Activated CD8-positive, alpha-beta T cell treated with anti-CD3 and anti-CD28 coated beads for 36 hours (primary cell): ENCODE measurements at regions of chr1 and their contacts with region 1.

Region 1: GRCh38 chr1:167533851-167534300 is 15.5 kb upstream of the CD247 start:
- DNase-seq: peak; percentile 74
- ATAC-seq: peak; percentile 94
- H3K4me3 Mint-ChIP-seq: no peak overlapping the region
- H3K27ac Mint-ChIP-seq: no peak overlapping the region
- H3K4me1 Mint-ChIP-seq: peaks cover 4% of the 10 kb centered on the region
- H3K27me3 Mint-ChIP-seq: no peaks in the 10 kb centered on the region
- CTCF ChIP-seq: peak; percentile 99

Region 2: GRCh38 chr1:167196166-167196565 is 337.7 kb before region 1 on chr1:
- CTCF ChIA-PET with region 1: no interaction called
- POLR2A ChIA-PET with region 1: no interaction called
- intact Hi-C with region 1: no loop called
- DNase-seq: no peak
- ATAC-seq: peak; percentile 54
- H3K4me3 Mint-ChIP-seq: no peak overlapping the region
- H3K27ac Mint-ChIP-seq: no peak overlapping the region
- H3K4me1 Mint-ChIP-seq: peaks cover 6% of the 10 kb centered on the region
- H3K27me3 Mint-ChIP-seq: peaks cover 2% of the 10 kb centered on the region
- CTCF ChIP-seq: no peak

Region 3: GRCh38 chr1:167401260-167401873 is 132.5 kb before region 1 on chr1:
- CTCF ChIA-PET with region 1: interaction called, 82 read pairs
- POLR2A ChIA-PET with region 1: no interaction called
- intact Hi-C with region 1: no loop called
- DNase-seq: peak; percentile 69
- ATAC-seq: peak; percentile 77
- H3K4me3 Mint-ChIP-seq: no peak overlapping the region
- H3K27ac Mint-ChIP-seq: no peak overlapping the region
- H3K4me1 Mint-ChIP-seq: peaks cover 2% of the 10 kb centered on the region
- H3K27me3 Mint-ChIP-seq: no peaks in the 10 kb centered on the region
- CTCF ChIP-seq: peak; percentile 68

Region 4: DNA sequence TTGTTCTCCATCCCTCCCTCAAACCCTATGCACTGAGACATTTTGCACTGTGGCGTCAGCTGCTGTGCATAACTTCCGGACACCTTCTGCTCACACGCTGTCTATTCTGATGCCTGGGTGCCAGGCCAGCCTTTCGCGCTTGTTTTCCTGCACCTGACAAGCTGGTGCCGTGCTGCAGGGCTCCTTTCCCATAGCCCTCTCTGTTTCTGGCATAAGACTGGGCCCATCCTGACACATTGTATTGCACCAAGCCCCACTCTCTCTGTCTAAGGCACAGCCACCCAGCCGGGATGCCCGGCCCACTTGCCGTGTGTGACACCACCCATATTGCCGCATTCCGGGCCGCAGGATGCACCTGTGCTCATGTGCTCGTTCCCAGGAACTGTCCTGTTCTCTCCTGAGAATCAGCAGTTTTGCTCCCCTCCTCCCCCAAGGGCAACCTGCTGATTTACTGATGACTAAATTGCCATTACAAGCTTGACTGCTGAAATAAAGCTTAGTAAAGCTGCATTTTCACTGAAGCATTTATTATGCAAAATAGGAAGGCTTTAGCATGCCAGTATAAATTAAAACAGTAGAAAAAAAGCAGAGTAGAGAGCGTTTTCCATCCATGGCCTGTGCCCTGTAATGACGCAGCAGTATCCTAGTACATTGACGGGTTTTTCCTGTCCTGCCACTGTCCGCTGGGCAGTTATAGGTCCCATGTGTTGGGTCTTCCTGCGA is 103.6 kb before region 1 on chr1:
- CTCF ChIA-PET with region 1: interaction called, 17 read pairs
- POLR2A ChIA-PET with region 1: interaction called, 5 read pairs
- intact Hi-C with region 1: no loop called
- DNase-seq: no peak
- ATAC-seq: peak; percentile 11
- H3K4me3 Mint-ChIP-seq: no peak overlapping the region
- H3K27ac Mint-ChIP-seq: peak overlapping the region; percentile 84
- H3K4me1 Mint-ChIP-seq: peaks cover 39% of the 10 kb centered on the region
- H3K27me3 Mint-ChIP-seq: no peaks in the 10 kb centered on the region
- CTCF ChIP-seq: no peak

Region 5: DNA sequence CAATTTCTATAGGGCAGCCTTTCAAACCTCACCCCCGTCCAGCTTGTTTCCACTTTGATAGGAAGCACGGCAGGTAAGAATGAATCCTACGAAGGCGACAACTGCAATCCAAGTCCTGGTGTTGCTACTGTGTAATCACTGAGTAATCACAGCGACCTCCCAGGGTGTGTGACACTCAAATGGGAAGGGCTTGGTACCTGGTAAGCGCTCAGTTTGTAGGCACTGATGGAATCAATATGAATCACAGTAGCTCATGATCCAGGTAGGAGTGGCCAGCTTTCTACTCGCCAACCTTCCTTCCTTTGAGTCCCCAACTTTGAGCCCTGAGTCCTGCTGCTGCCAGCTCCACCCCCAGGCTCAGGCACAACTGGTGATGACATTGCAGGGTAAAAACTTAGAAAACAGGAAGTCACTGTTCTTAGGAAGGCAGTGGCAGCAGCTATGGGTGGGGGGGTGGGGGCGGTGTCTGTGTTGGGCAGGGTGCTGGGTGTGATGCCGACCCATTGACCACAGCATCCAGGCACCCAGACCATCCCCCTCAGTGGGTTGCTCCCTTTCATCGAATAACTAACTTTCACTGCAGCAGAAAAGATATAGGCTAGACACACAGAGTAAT is 86.2 kb before region 1 on chr1:
- CTCF ChIA-PET with region 1: interaction called, 25 read pairs
- POLR2A ChIA-PET with region 1: no interaction called
- intact Hi-C with region 1: no loop called
- DNase-seq: peak; percentile 90
- ATAC-seq: peak; percentile 82
- H3K4me3 Mint-ChIP-seq: peak overlapping the region; percentile 65
- H3K27ac Mint-ChIP-seq: peak overlapping the region; percentile 91
- H3K4me1 Mint-ChIP-seq: peaks cover 82% of the 10 kb centered on the region
- H3K27me3 Mint-ChIP-seq: no peaks in the 10 kb centered on the region
- CTCF ChIP-seq: no peak

Region 6: GRCh38 chr1:167486090-167486824 is 47.6 kb before region 1 on chr1:
- CTCF ChIA-PET with region 1: interaction called, 11 read pairs
- POLR2A ChIA-PET with region 1: no interaction called
- intact Hi-C with region 1: no loop called
- DNase-seq: peak; percentile 62
- ATAC-seq: no peak
- H3K4me3 Mint-ChIP-seq: peak overlapping the region; percentile 56
- H3K27ac Mint-ChIP-seq: peak overlapping the region; percentile 93
- H3K4me1 Mint-ChIP-seq: peaks cover 94% of the 10 kb centered on the region
- H3K27me3 Mint-ChIP-seq: no peaks in the 10 kb centered on the region
- CTCF ChIP-seq: no peak

Region 7: DNA sequence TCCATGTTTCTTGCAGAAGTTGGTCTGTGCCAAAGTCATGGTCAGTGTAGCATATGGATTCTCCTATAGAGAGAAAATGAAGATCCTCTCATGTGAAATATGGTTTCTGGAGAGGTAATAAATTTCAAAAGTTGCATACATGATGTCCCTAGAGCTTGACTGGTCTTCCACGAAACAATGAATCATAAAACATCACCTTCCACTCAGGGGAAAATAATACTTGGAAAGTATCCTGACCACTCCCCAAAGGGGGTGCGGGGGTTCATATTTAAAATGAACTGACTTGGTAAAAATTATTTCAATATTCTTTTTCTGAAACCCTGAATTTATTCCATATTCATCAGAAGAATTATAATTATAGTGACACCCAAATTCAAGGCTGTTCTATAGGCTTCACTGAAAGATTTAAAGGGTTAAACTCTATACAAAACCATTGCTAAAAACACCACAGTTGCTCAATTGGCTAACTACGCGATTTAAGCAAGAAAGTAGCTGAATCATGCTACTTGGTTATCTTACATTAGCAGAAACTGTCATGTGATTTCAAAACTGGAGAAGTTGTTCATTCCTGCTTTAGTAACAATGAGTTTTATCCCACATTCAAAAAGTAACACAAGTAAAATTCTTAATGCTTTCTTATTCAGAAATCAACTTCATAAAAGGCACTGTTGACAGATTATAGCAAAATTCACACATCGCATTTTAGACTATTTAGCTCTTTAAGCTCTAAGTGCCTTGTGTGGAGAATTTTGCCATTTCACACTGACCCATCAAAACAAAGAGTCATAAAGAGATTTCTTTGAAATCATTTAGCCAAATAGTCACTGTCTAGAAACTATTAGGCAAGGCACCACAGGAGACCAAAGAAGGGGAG is 14.4 kb after region 1 on chr1:
- CTCF ChIA-PET with region 1: interaction called, 94 read pairs
- POLR2A ChIA-PET with region 1: no interaction called
- intact Hi-C with region 1: no loop called
- DNase-seq: no peak
- ATAC-seq: no peak
- H3K4me3 Mint-ChIP-seq: no peak overlapping the region
- H3K27ac Mint-ChIP-seq: no peak overlapping the region
- H3K4me1 Mint-ChIP-seq: peaks cover 24% of the 10 kb centered on the region
- H3K27me3 Mint-ChIP-seq: no peaks in the 10 kb centered on the region
- CTCF ChIP-seq: no peak